Sigmoid colon (tissue), 7 donors: ENCODE measurements at regions of chr18 and their contacts with region 1.

Region 1: DNA sequence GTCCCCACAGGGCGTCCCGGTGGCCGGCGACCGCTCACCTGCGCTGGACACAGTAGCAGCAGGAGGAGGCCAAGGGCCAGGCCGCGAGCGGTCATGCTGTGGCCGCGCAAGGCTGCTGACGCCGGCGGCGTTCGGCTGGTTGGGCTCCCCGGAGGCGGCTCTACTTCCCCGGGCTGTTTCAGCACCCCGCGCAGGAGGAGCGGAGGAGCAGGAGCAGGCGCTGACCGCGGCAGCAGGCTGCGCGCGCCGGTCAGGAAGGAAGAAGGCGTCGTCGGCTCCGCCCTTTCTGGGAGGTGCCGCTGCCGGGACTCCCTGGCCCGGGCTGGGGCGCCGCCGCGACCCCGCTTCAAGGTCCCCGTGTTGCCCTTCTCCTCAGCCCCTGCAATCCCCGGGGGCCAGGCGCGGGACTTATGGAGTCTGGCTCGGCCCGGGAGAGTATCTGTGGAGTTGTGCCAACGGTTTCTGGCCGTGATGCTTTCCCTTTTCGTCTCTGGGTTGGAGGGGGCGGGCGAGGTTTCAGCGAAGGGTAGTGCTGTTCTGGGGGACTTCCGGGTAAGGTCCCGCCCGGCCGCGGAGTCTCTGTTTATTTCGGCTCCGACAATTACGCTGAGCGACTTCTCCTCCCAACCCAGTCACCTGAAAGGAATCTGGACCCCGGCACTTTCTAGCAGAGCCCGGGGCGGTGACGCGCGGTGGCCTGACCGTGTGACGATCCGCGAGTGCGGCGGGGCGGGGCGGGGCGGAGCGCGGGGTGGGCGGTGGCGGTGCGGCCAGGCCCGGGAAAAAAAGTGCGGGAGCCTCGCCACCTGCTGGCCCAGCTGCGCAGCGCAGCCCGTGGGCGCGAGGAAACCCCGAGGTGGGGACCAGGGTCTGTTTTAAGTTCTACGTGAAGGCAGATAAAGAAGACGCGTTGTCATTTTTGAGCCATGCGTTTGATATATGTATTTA is at the start of gene NPC1:
- DNase-seq: peak; percentile 97
- H3K4me3 ChIP-seq: peak within 1 kb of the TSS; percentile 78 to 87 (median 82)
- H3K27ac ChIP-seq: peak within 1 kb of the TSS; percentile 98 to 99 (median 99)
- H3K4me1 ChIP-seq: peaks cover 0 to 33% (median 22%) of the 10 kb centered on the region in 4 donors
- H3K27me3 ChIP-seq: no peaks in the 10 kb centered on the region
- CTCF ChIP-seq: peak; percentile 77 to 96 (median 82)
- EP300 ChIP-seq: peak in 1 of 4 donors; percentile 47
- POLR2A ChIP-seq: peak; percentile 85 to 91
- total RNA-seq, gene NPC1: 34.9 to 59.2 (median 48.1) TPM

Region 2: DNA sequence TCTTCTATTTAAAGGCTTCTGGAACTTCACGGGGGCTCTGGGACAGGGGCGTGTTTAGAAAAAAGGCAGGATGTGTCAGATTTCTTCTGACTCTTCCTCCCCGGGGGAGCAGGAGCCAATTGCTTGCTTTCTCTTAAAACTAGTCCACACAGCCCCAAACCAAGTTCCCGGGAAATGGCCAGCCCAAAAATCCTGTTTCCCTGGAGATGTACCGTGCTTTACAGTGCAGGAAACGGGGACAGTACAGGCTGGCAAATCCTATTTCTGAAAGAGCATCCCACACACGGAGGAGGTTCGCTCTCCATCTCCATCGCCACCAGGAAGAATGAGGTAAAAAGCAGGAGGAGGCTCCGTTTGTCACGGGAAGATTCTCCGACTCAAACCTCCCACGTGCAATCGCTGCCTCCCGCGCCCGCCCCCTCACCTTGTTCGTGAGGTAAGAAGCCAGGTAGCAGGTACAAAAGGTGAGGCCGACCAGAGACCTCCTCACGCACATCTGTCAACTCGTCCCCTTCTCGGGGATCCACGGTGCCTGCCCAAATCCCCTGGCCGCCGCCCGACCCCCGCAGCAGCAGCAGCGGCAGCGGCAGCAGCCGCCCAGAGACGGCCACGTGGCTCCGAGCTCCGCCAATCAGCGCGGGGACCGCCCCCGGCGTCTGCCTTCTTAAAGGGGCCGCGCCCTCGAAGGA is 149.0 kb before region 1 on chr18:
- intact Hi-C with region 1: loop called (anchors 5 kb)
- DNase-seq: peak; percentile 90
- H3K4me3 ChIP-seq: peak overlapping the region; percentile 66 to 79 (median 68)
- H3K27ac ChIP-seq: peak overlapping the region; percentile 56 to 69 (median 64)
- H3K4me1 ChIP-seq: peaks cover 0 to 14% (median 12%) of the 10 kb centered on the region in 4 donors
- H3K27me3 ChIP-seq: no peaks in the 10 kb centered on the region
- CTCF ChIP-seq: no peak
- EP300 ChIP-seq: no peak
- POLR2A ChIP-seq: no peak

Region 3: GRCh38 chr18:23452728-23453679 is 133.5 kb before region 1 on chr18 and contains the start of gene RIOK3:
- intact Hi-C with region 1: loop called (anchors 5 kb)
- DNase-seq: peak; percentile 98
- H3K4me3 ChIP-seq: peak within 1 kb of the TSS; percentile 75 to 96 (median 78)
- H3K27ac ChIP-seq: peak within 1 kb of the TSS; percentile 89 to 97 (median 93)
- H3K4me1 ChIP-seq: peaks cover 0 to 41% (median 34%) of the 10 kb centered on the region in 4 donors
- H3K27me3 ChIP-seq: no peaks in the 10 kb centered on the region
- CTCF ChIP-seq: no peak
- EP300 ChIP-seq: peak in 1 of 4 donors; percentile 33
- POLR2A ChIP-seq: peak; percentile 90 to 93
- total RNA-seq, gene RIOK3: 38.2 to 54.6 (median 45.6) TPM

Region 4: GRCh38 chr18:23515911-23516546 is 70.5 kb before region 1 on chr18:
- intact Hi-C with region 1: loop called (anchors 1 kb)
- DNase-seq: peak; percentile 82
- H3K4me3 ChIP-seq: no peak overlapping the region
- H3K27ac ChIP-seq: no peak overlapping the region
- H3K4me1 ChIP-seq: peaks cover 0 to 4% (median 0%) of the 10 kb centered on the region in 4 donors
- H3K27me3 ChIP-seq: no peaks in the 10 kb centered on the region
- CTCF ChIP-seq: peak; percentile 50 to 77 (median 75)
- EP300 ChIP-seq: no peak
- POLR2A ChIP-seq: no peak

Region 5: DNA sequence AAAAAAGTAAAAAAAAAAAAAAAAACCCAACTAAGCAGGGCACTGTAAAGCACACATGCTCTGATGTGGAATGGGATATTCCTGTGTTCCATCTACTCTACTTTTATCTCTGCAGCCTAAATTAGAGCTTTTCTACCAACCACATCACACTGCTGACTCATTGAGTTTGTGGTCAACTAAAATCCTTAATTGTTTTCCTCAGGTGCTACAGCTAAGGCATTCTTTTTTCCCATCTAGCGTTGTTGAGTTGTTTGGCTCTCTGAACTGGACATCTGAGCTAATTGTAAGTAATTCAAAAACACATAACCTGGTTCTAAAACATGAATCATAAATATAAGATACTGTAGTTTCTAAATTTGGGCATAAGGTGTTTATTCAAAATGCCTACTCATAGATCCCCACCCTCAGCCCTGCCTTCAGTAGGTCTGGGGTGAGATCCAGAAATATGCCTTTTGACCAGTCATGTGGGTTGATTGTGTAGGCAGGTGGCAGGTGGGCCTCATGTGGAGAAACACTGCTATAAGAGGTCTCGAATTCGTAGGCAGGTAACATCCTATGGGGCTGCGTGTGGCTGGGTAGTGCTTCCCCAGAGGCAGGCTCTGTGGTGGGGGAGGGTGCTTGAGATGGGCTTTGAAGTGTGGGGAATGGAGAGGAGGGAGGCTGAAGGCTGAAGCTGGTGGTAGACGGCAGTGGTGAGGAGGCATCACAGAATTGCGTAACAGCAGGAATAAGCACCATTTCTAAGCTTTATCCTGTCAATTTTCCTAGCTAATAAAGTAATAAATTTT is 49.0 kb after region 1 on chr18:
- intact Hi-C with region 1: no loop called
- DNase-seq: no peak
- H3K4me3 ChIP-seq: no peak overlapping the region
- H3K27ac ChIP-seq: no peak overlapping the region
- H3K4me1 ChIP-seq: no peaks in the 10 kb centered on the region
- H3K27me3 ChIP-seq: no peaks in the 10 kb centered on the region
- CTCF ChIP-seq: no peak
- EP300 ChIP-seq: no peak
- POLR2A ChIP-seq: no peak